KBM-7 (cell line): ENCODE measurements at regions of chr1 and their contacts with region 1.

Region 1: GRCh38 chr1:25895365-25895993 is 10.7 kb downstream of the STMN1 start:
- DNase-seq: peak; percentile 96

Region 2: GRCh38 chr1:25997828-25998761 is 102.6 kb after region 1 on chr1 and contains the start of gene PAFAH2:
- in situ Hi-C with region 1: loop called (anchors 10 kb)
- DNase-seq: peak; percentile 99